ENCODE measurements at regions of chr17 and their contacts with region 1.

Region 1: GRCh38 chr17:44095642-44096496 is 25.3 kb downstream of the G6PC3 start:
- DNase-seq: peak; percentile 77 to 90 (median 86)
- ATAC-seq: peak; percentile 68 to 82 (median 73)
- H3K4me3 ChIP-seq: peak overlapping the region in 10 of 12 donors; percentile 3 to 62 (median 38)
- H3K27ac ChIP-seq: peak overlapping the region; percentile 78 to 98 (median 90)
- H3K4me1 ChIP-seq: peaks cover 5 to 65% (median 50%) of the 10 kb centered on the region in 12 donors
- H3K27me3 ChIP-seq: no peaks in the 10 kb centered on the region
- CTCF ChIP-seq: peak in 8 of 12 donors; percentile 24 to 48 (median 26)
- POLR2A ChIP-seq: no peak

Region 2: GRCh38 chr17:44084131-44084544 is 11.7 kb before region 1 on chr17:
- intact Hi-C with region 1: loop called in 1 of 10 experiments (anchors 2 kb)
- DNase-seq: no peak
- ATAC-seq: no peak
- H3K4me3 ChIP-seq: no peak overlapping the region
- H3K27ac ChIP-seq: no peak overlapping the region
- H3K4me1 ChIP-seq: peaks cover 0 to 8% (median 0%) of the 10 kb centered on the region in 12 donors
- H3K27me3 ChIP-seq: no peaks in the 10 kb centered on the region
- CTCF ChIP-seq: peak in 7 of 12 donors; percentile 10 to 37 (median 15)
- POLR2A ChIP-seq: no peak

Measured in heart left ventricle (tissue), 16 donors.